Activated naive CD4-positive, alpha-beta T cell treated with anti-CD3 and anti-CD28 coated beads, Interleukin-2, amount 10 ng/mL, durations not matched to agents 7 days and 5 days (primary cell): ENCODE measurements at regions of chr20 and their contacts with region 1.

Region 1: GRCh38 chr20:13302647-13303450 is 81.8 kb downstream of the ISM1 start:
- DNase-seq: peak; percentile 68
- H3K4me3 Mint-ChIP-seq: no peak overlapping the region
- H3K27ac Mint-ChIP-seq: no peak overlapping the region
- H3K4me1 Mint-ChIP-seq: no peaks in the 10 kb centered on the region
- H3K27me3 Mint-ChIP-seq: no peaks in the 10 kb centered on the region

Region 2: DNA sequence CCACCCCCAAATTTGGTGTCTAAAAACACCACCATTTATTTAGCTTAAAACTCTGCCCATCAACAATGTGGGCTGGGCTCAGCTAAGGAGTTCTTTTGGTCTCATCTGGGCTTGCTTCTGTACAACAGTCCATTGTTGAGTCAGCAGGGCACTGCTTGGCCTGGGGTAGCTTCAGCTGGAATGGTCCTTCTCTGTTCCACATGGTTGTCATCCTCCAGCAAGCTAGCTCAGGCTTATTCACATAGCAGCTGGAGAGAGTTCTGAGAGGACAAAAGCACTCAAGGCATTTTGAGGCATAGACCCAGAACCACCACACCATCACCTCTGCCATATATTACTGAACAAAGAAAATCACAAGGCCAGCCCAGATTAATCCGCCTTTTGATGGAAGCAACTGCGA is 177.4 kb before region 1 on chr20:
- CTCF ChIA-PET with region 1: interaction called, 69 read pairs
- DNase-seq: no peak
- H3K4me3 Mint-ChIP-seq: no peak overlapping the region
- H3K27ac Mint-ChIP-seq: no peak overlapping the region
- H3K4me1 Mint-ChIP-seq: no peaks in the 10 kb centered on the region
- H3K27me3 Mint-ChIP-seq: peaks cover 6% of the 10 kb centered on the region

Region 3: DNA sequence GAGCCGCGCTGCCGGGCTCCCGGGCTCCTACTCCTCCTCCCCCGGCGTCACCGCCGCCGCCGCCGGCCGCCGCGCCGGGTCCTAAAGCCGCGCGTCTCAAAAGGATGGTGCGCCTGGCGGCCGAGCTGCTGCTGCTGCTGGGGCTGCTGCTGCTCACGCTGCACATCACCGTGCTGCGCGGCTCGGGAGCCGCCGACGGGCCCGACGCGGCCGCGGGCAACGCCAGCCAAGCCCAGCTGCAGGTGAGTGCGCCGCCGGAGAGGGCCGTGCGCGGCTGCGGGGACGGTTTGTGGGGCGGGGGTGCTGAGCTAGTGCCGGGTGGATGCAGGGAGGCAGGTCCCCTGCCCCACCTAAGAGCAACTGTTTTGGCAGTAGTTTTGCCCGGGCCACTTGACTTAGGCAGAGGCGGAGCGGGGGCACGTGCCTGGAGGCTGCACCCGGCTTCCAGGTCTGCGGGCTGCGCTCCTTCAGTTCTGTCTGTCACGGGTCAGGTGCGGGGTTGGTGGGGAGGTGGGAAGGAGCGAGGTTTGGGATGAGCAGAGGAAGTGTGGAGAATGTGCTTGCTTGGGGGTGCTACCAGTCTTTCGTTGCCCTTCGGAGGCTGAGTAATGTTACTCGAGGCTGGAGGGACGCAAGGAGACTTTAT is 81.1 kb before region 1 on chr20:
- CTCF ChIA-PET with region 1: no interaction called
- DNase-seq: peak; percentile 80
- H3K4me3 Mint-ChIP-seq: peak overlapping the region; percentile 71
- H3K27ac Mint-ChIP-seq: peak overlapping the region; percentile 56
- H3K4me1 Mint-ChIP-seq: peaks cover 21% of the 10 kb centered on the region
- H3K27me3 Mint-ChIP-seq: peaks cover 56% of the 10 kb centered on the region

Region 4: DNA sequence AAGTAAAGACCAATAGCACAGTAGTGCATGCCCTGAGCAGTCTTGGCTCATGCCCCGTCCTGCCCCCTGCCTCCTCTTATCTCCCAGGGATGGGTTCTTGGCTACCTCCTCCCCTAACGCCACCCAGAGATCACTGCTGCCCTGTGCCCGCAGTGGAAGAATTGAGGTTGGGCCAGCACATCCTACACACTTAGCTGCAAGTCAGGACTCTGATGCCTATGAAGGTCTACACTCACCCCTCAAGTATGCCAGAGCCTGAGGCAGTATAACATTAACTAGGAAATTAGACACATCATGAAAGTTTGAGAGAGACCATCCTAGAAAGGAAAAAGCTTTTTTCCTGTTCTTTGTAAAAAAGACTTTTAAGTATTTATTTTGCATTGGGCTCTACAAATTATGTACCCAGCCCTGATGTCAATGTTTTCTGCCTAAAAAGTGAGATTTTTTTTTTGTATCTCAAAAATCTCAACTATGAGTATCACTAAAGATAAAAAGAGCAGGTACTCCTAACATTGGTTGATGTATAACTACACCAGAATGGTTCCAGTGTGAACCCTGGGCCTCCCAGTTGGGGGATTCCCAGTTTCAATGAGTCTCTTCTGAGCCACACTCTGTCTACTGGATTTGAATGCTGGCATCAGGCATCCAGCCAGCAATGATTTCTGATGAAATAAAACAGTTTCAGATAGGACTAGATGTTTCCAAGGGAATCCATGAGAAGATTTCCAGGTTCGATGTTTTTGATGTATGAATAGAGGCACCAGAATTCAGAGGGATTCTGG is 33.6 kb after region 1 on chr20:
- CTCF ChIA-PET with region 1: no interaction called
- DNase-seq: no peak
- H3K4me3 Mint-ChIP-seq: no peak overlapping the region
- H3K27ac Mint-ChIP-seq: no peak overlapping the region
- H3K4me1 Mint-ChIP-seq: no peaks in the 10 kb centered on the region
- H3K27me3 Mint-ChIP-seq: no peaks in the 10 kb centered on the region

Region 5: GRCh38 chr20:13348311-13349234 is 45.7 kb after region 1 on chr20:
- CTCF ChIA-PET with region 1: no interaction called
- DNase-seq: no peak
- H3K4me3 Mint-ChIP-seq: no peak overlapping the region
- H3K27ac Mint-ChIP-seq: no peak overlapping the region
- H3K4me1 Mint-ChIP-seq: no peaks in the 10 kb centered on the region
- H3K27me3 Mint-ChIP-seq: no peaks in the 10 kb centered on the region